H1 (cell line): ENCODE measurements at regions of chr3 and their contacts with region 1.

Region 1: DNA sequence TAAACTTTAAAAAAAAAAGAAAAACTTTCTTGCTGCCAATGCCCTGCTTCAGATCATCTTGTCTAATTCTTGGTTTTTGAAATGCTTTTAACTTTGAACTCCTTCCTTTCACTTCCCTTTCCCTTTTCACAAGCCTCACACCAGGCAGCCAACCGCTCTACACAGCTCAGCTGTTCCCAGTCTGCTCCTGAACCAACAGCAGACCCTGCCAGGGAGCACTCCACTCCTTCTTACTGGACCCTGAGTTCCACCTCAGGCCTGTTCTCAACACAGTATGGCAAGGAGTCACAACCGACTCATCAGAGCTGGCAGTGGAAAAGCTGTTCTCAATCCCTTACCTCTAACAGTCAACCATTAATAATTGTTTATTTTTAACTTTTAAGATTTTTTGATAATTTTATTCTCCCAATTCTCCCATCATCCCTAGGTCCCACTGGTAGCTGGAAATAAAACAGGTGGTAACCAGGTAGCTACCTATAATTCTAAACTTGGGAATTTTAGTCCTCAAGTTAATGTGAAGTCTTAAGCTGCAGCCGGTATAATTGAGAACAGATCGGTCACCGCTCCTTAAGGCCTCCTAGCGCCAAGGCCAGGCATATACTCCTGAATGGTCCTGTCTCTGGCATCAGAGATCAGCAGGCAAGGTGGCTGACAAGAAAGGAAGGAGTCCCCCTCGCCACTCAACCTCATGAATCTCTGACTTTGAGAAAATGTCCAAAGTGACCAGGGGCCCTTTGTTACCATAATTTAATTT is 43.9 kb downstream of the BOC start:
- DNase-seq: no peak
- H3K4me3 ChIP-seq: no peak overlapping the region
- H3K27ac ChIP-seq: no peak overlapping the region
- H3K4me1 ChIP-seq: peaks cover 0 to 5% (median 4%) of the 10 kb centered on the region in 4 experiments; a peak in 4 of 7 replicates
- H3K27me3 ChIP-seq: no peaks in the 10 kb centered on the region
- CTCF ChIP-seq: peak; percentile 44 to 47 (median 45)
- EP300 ChIP-seq: no peak
- POLR2A ChIP-seq: no peak
- RAD21 ChIP-seq: peak; percentile 19 to 49; a peak in 3 of 4 replicates

Region 2: DNA sequence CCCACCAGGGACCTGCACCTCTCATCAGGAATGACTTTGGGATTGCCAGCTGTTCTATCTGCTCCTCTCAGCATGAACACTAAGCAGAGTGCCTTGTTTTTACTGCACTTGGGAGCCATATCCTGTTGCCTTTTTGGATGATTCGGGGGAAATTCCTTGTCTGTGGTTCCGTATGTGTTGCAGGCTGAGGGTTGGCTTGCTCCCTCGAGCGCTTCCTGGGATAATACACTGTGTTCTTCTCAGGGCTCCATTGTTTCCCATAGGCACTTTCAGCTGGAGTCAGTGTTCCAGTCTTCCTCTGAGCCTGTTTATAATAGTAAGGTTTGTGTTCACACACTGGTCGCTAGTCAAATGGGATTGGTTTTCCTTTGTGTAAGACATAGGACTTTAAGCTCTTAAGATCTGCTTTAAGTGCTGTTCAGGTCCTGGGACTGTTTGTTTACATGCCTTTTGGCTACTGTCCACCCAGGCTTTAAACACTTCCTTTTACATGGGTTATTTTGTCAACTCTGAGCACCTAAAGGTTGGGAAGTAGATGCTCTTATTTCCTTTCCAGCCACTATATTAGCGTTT is 20.5 kb before region 1 on chr3:
- CTCF ChIA-PET with region 1: interaction called, 20 read pairs
- POLR2A ChIA-PET with region 1: no interaction called
- DNase-seq: no peak
- H3K4me3 ChIP-seq: no peak overlapping the region
- H3K27ac ChIP-seq: no peak overlapping the region; the same call in 1 of the 2 replicates
- H3K4me1 ChIP-seq: peaks cover 0 to 7% (median 4%) of the 10 kb centered on the region in 4 experiments; a peak in 6 of 7 replicates
- H3K27me3 ChIP-seq: no peaks in the 10 kb centered on the region
- CTCF ChIP-seq: no peak
- EP300 ChIP-seq: no peak
- POLR2A ChIP-seq: no peak
- RAD21 ChIP-seq: no peak

Region 3: GRCh38 chr3:113269661-113270060 is 14.4 kb after region 1 on chr3:
- CTCF ChIA-PET with region 1: interaction called, 63 read pairs
- POLR2A ChIA-PET with region 1: no interaction called
- DNase-seq: no peak
- H3K4me3 ChIP-seq: no peak overlapping the region
- H3K27ac ChIP-seq: no peak overlapping the region
- H3K4me1 ChIP-seq: peaks cover 5 to 15% (median 11%) of the 10 kb centered on the region in 4 experiments
- H3K27me3 ChIP-seq: 0 out of 7 replicates have a peak, but pooled peaks cover 0 to 1% (median 0%) of the 10 kb centered on the region in 4 experiments
- CTCF ChIP-seq: no peak
- EP300 ChIP-seq: no peak
- POLR2A ChIP-seq: no peak
- RAD21 ChIP-seq: no peak

Region 4: DNA sequence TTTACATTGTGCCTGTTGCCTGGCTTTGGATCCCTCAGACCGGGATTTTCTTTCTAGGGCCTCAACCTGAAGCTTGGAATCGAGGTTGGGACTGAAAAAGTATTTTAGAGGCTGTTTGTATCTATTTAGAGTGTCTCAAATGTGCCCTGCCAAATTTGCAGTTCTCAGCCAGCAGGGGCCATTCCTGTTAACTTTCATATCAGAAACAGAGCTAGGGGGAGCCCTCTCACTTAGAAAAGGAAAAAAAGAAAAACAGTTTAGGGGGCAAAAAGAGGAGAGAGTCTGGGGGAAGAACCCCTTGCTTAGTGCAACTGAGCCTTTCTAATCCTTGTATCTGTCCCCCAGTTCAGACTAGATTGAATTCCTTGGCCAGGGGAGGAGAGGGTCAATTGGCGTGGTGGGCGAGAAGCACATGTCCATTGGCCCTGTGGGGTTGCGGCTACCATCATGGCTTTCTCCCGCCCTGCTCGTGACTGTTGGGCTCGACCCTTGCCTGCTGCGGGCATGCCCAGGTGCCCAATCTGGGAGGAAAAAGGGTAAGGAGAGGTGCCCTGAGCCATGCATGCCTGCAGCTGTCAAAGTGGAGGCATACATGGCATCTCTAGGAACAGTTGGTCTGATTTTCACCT is 84.5 kb after region 1 on chr3:
- CTCF ChIA-PET with region 1: no interaction called
- POLR2A ChIA-PET with region 1: no interaction called
- DNase-seq: peak in 1 of 2 experiments; percentile 52
- H3K4me3 ChIP-seq: no peak overlapping the region
- H3K27ac ChIP-seq: no peak overlapping the region
- H3K4me1 ChIP-seq: no peaks in the 10 kb centered on the region
- H3K27me3 ChIP-seq: no peaks in the 10 kb centered on the region
- CTCF ChIP-seq: peak in 2 of 3 experiments; percentile 46 to 89; a peak in 3 of 4 replicates
- EP300 ChIP-seq: no peak
- POLR2A ChIP-seq: no peak
- RAD21 ChIP-seq: peak; percentile 52 to 58